Endothelial cell of umbilical vein (primary cell): ENCODE measurements at regions of chr12 and their contacts with region 1.

Region 1: GRCh38 chr12:59386236-59386635 is 209.6 kb upstream of the SLC16A7 start:
- DNase-seq: no peak
- H3K4me3 ChIP-seq: no peak overlapping the region
- H3K27ac ChIP-seq: no peak overlapping the region
- H3K4me1 ChIP-seq: no peaks in the 10 kb centered on the region
- H3K27me3 ChIP-seq: no peaks in the 10 kb centered on the region
- CTCF ChIP-seq: no peak
- POLR2A ChIP-seq: no peak

Region 2: DNA sequence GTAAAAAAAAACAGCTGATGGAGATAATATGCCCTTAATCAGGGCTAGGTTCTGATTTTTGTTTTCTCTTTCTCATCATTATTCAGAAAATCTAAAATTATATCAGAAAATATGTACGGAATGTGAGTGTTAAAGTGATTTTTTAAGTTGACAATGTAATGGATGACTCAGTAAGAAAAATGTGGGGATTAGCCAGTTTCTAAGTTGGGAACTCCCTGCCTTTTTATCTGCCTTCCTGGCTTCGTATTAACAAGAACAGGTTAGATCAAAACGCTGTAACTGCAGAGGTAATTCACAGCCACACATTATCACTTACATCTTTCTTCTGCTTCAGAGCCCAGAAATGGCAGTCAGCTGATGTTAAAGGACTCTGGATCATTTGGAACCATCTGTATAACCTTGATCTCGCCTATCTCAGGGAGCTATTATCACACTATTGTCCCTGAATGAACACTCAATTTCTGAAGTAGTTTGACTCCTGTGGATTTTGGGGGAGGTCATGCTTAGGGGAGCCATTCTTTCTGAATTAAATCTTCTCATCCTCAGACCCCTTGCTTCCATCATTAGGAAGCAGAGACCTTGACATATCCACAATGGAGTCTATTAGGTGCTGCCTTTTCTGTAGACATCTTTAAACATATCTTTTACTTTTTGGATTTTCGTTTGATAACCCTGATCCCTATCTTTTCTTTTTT is 73.9 kb after region 1 on chr12:
- CTCF ChIA-PET with region 1: no interaction called
- POLR2A ChIA-PET with region 1: no interaction called
- dilution Hi-C with region 1: no loop called
- intact Hi-C with region 1: no loop called
- DNase-seq: peak; percentile 17
- H3K4me3 ChIP-seq: no peak overlapping the region
- H3K27ac ChIP-seq: no peak overlapping the region
- H3K4me1 ChIP-seq: no peaks in the 10 kb centered on the region
- H3K27me3 ChIP-seq: no peaks in the 10 kb centered on the region
- CTCF ChIP-seq: no peak
- POLR2A ChIP-seq: no peak

Region 3: GRCh38 chr12:60616400-60616799 is 1230.2 kb after region 1 on chr12:
- CTCF ChIA-PET with region 1: no interaction called
- POLR2A ChIA-PET with region 1: no interaction called
- dilution Hi-C with region 1: no loop called
- intact Hi-C with region 1: loop called (anchors 5 kb)
- DNase-seq: no peak
- H3K4me3 ChIP-seq: no peak overlapping the region
- H3K27ac ChIP-seq: no peak overlapping the region
- H3K4me1 ChIP-seq: no peaks in the 10 kb centered on the region
- H3K27me3 ChIP-seq: no peaks in the 10 kb centered on the region
- CTCF ChIP-seq: no peak
- POLR2A ChIP-seq: no peak